Ascending aorta (tissue), 2 donors: ENCODE measurements at regions of chr3 and their contacts with region 1.

Region 1: DNA sequence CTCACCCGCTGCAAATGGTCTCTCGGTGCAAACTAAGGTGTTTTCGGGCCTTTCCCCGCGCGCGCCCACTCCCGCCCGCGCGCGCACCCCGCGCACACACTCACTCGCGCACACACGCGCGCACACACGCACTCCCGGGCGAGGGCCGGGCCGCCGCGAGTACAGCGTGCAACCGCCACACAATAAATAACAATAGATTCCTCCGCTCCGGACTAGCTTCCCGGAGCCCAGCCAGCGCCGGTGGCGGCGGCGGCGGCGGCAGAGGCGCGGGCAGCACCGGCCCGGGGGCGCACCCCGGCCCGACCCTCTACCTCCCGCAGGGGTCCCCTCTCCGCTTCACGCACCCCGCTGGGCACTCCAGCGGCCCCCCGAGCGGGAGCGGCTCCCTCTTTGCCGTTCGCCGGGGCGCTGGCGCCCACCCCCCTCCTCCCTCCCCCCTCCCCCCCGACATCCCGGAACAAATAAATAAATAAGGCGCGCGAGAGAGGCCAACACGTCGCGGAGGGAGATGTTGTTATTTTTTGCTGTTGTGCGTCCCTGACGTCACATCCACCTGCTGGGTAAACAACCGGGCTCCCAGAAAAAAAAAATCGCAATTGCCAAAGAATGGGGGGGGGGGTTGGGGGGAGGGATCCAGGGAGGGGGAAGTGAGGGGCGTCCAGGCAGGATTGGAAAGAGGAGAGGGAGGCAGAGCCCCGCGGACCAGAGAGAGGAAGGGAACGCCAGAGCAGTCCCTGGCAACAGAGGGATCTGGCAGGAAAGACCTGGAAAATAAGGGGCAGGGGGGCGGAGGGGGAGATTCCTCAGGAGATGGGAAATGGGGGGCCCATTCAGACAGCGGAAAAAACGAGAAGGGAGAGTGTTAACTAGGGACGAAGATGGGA is at the start of gene FOXP1:
- DNase-seq: peak in 1 of 2 donors; percentile 89
- H3K4me3 ChIP-seq: peak within 1 kb of the TSS; percentile 85 to 93
- H3K27ac ChIP-seq: peak within 1 kb of the TSS; percentile 96 to 100
- H3K4me1 ChIP-seq: peaks cover 0 to 12% of the 10 kb centered on the region in 2 donors
- H3K27me3 ChIP-seq: no peaks in the 10 kb centered on the region
- CTCF ChIP-seq: no peak
- total RNA-seq, gene FOXP1: 171 TPM

Region 2: GRCh38 chr3:70982700-70983140 is 601.1 kb before region 1 on chr3:
- intact Hi-C with region 1: loop called (anchors 10 kb)
- DNase-seq: peak; percentile 31 to 83
- H3K4me3 ChIP-seq: peak overlapping the region; percentile 27 to 37
- H3K27ac ChIP-seq: peak overlapping the region; percentile 82 to 93
- H3K4me1 ChIP-seq: peaks cover 8 to 60% of the 10 kb centered on the region in 2 donors
- H3K27me3 ChIP-seq: no peaks in the 10 kb centered on the region
- CTCF ChIP-seq: no peak

Region 3: DNA sequence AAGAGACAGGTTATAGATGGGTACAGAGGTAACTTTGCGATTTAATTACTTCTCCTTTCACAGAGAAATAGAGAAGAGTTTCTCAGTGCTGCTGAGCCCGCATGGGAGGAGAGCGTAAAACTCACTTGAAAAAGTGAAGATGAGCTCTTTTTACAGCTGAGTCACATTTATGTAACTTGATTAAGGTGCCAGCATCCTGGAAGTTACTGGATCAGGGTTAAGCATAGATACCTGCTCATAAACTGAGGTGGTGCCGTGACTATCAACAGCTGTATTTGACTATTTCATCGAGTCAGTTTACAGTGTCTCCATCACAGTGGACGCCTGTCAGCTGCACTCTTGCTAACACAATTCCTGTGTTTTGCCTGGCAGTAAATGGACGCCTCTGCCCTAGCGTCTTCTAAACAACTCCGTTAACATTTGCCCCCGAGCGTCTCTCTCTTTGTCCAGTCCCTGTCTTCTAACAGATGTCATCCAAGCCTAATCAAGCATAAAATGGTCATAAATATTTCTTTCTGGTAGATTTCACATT is 414.9 kb before region 1 on chr3:
- intact Hi-C with region 1: loop called (anchors 10 kb)
- DNase-seq: no peak
- H3K4me3 ChIP-seq: peak overlapping the region in 1 of 2 donors; percentile 46
- H3K27ac ChIP-seq: peak overlapping the region; percentile 70 to 87
- H3K4me1 ChIP-seq: peaks cover 9 to 56% of the 10 kb centered on the region in 2 donors
- H3K27me3 ChIP-seq: no peaks in the 10 kb centered on the region
- CTCF ChIP-seq: no peak

Region 4: GRCh38 chr3:71305231-71306206 is 278.3 kb before region 1 on chr3:
- intact Hi-C with region 1: loop called (anchors 2 kb)
- DNase-seq: no peak
- H3K4me3 ChIP-seq: peak overlapping the region; percentile 27 to 62
- H3K27ac ChIP-seq: peak overlapping the region; percentile 68 to 74
- H3K4me1 ChIP-seq: peaks cover 0 to 24% of the 10 kb centered on the region in 2 donors
- H3K27me3 ChIP-seq: no peaks in the 10 kb centered on the region
- CTCF ChIP-seq: no peak

Region 5: DNA sequence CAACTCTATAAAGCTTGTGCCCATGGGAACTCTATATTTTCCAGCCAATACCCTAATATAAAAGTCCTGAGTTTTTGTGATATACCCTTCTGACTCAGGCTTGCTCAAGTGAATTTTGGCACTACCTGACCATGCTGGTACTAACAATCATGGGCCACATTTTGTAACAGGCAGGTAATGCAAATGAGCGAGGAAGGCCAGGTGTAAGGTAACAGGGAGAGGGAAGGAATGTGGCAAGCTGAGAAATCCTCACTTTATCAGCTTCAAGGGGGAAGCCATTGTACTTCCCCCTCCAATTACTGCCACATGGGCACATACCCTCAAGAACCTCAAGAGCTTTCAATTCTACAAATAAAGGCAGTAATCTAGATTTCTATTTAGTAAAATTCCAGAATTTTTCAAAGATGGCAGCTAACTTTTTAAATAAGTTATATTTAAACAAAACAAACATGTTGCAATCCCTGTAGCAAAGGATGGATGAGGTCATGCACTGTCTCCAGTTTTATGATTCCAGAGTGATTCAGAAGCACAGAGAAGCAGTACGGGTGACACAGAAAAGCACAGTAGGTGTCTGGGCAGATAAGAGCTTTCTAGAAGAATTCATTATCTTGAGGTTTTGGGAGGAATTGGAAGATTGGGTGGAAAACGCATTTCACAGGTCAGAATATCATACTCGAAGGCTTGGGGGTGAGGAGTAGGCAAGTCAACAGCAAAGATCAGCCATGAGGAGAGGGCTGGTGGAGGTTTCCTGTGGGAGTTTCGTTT is 87.9 kb before region 1 on chr3:
- intact Hi-C with region 1: loop called (anchors 2 kb)
- DNase-seq: no peak
- H3K4me3 ChIP-seq: peak overlapping the region; percentile 22 to 49
- H3K27ac ChIP-seq: peak overlapping the region; percentile 81 to 85
- H3K4me1 ChIP-seq: peaks cover 10 to 25% of the 10 kb centered on the region in 2 donors
- H3K27me3 ChIP-seq: no peaks in the 10 kb centered on the region
- CTCF ChIP-seq: no peak

Region 6: DNA sequence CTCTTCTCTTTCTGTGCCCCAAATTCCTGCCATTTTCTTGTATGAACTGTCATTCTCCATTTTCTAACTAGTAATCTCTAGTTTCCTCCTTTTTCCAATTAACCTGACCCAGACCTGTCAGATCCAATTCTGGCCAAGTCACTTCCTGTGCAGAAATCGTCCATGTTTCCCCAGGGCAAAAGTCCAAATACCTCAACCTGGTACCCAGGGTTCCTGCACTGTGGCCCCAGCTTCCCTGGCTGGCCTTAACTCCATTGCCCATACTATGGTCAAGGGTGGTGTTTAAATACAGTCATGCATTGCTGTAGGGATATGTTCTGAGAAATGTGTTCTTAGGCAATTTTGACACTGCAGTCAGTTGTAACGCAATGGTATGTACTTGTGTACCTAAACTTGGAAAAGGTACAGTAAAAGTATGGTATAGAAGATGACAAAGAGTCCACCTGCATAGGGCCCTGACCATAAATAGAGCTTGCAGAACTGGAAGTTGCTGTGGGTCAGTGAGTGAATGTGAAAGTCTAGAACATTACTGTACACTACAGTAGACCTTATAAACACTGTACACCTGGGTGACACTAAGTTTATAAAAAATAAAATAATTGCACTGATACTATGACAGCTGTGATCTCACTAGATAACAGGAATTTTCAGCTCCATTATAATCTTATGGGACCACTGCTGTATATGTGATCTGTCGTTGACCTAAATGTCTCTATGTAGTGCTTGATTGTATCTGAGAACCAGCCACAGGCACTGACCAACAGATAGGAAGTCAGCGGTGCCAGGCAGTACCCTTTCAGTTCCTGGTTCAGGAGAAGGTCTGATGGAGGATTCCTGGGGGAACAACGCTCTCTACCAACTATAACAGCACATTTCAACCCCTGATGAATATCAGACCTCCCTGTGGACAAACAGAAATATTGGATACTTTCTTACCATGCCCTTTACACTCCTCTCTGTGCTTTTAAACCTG is 537.3 kb after region 1 on chr3:
- intact Hi-C with region 1: no loop called
- DNase-seq: no peak
- H3K4me3 ChIP-seq: no peak overlapping the region
- H3K27ac ChIP-seq: no peak overlapping the region
- H3K4me1 ChIP-seq: peaks cover 4 to 11% of the 10 kb centered on the region in 2 donors
- H3K27me3 ChIP-seq: no peaks in the 10 kb centered on the region
- CTCF ChIP-seq: no peak